ENCODE measurements at regions of chr6 and their contacts with region 1.

Region 1: GRCh38 chr6:152129691-152130151 is 322.2 kb downstream of the ESR1 start:
- DNase-seq: no peak
- H3K4me3 ChIP-seq: peak overlapping the region; percentile 5 to 33
- H3K27ac ChIP-seq: peak overlapping the region; percentile 80 to 82
- H3K4me1 ChIP-seq: peaks cover 0 to 3% of the 10 kb centered on the region in 2 donors
- H3K27me3 ChIP-seq: no peaks in the 10 kb centered on the region
- CTCF ChIP-seq: no peak
- POLR2A ChIP-seq: no peak

Region 2: DNA sequence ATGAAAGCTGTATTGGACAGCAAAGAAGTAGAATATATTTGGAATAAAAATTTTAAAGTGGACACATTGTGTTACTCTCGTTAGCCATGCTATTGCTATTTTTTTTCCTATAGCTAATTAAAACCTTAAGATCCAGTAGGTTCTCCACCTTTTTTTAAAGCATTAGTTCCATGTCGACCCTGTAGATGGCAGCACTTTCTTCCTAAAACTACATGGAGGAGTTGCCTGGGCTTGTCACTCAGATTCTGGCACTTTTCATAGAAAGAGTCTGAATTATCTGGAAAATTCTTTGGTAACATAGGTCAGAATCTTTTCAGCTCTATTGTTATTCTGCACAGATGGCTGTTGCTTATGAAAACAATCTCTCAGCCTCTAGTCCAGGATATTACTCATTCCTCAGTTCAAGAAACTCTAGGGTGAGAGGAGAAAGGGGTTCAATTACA is 364.3 kb before region 1 on chr6:
- intact Hi-C with region 1: loop called (anchors 10 kb)
- DNase-seq: peak; percentile 36 to 75
- H3K4me3 ChIP-seq: no peak overlapping the region
- H3K27ac ChIP-seq: peak overlapping the region; percentile 32 to 79
- H3K4me1 ChIP-seq: peaks cover 0 to 9% of the 10 kb centered on the region in 2 donors
- H3K27me3 ChIP-seq: no peaks in the 10 kb centered on the region
- CTCF ChIP-seq: peak; percentile 67 to 81 (median 76)
- POLR2A ChIP-seq: no peak

Region 3: DNA sequence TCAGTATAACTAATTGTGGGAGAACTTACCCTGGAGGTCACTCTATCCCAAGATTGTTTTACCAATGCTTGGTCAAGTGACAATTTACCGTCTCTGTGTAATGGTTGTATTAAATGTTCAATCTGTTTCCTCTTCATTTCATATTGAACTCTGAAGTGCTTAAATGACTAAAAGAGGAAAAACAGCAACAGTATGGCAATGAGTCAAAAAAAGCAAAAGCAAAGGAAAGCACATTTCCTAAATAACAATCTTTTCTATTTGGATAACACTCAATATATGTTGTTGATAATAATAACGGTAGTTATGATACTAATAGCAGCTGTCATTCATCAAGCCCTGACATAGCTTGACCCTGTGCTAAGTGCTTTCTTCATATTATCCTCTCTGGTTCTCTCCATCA is 355.1 kb after region 1 on chr6:
- intact Hi-C with region 1: no loop called
- DNase-seq: no peak
- H3K4me3 ChIP-seq: no peak overlapping the region
- H3K27ac ChIP-seq: no peak overlapping the region
- H3K4me1 ChIP-seq: peaks cover 0 to 3% of the 10 kb centered on the region in 2 donors
- H3K27me3 ChIP-seq: no peaks in the 10 kb centered on the region
- CTCF ChIP-seq: no peak
- POLR2A ChIP-seq: no peak

Region 4: DNA sequence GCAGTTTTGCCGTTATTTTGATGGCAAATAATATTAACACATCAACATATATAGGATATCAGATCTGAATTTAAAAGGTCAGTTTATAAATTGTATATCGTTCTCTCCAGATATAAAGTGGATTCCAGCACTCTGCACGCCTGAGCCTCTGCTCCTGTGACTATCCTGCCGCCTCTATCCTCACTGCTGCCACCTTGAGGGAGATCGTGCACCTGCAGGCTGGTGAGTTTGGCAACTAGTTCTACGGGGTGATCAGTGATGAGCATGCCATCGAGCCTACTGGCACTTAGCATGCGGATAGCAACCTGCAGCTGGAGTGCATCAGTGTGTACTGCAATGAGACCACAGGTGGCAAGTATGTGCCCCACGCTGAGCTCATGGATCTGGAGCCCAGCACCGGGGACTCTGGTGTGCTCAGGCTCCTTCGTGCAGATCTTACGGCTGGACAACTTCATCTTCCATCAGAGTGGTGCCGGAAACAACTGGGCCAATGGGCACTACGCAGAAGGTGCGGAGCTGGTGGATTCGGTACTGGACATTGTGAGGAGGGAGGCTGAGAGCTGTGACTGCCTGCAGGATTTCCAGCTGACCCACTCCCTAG is 768.2 kb after region 1 on chr6:
- intact Hi-C with region 1: no loop called
- DNase-seq: peak; percentile 23 to 54
- H3K4me3 ChIP-seq: no peak overlapping the region
- H3K27ac ChIP-seq: no peak overlapping the region
- H3K4me1 ChIP-seq: no peaks in the 10 kb centered on the region
- H3K27me3 ChIP-seq: no peaks in the 10 kb centered on the region
- CTCF ChIP-seq: peak in 3 of 4 experiments; percentile 38 to 56 (median 39)
- POLR2A ChIP-seq: no peak

Measured in uterus (tissue), 4 donors.